Activated T-helper 2 cell treated with anti-CD3 and anti-CD28 coated beads, Interferon-gamma antibody, Interleukin-2, Interleukin-4, amounts not matched to agents 10 μg/mL and 5 μg/mL and 100 μg/mL, durations not matched to agents 14 hours and 24 hours and 36 hours (primary cell): ENCODE measurements at regions of chr3 and their contacts with region 1.

Region 1: GRCh38 chr3:184543843-184544512 is 17.6 kb upstream of the EPHB3 start:
- DNase-seq: peak; percentile 72
- H3K4me3 Mint-ChIP-seq: no peak overlapping the region
- H3K27ac Mint-ChIP-seq: no peak overlapping the region
- H3K4me1 Mint-ChIP-seq: peaks cover 2% of the 10 kb centered on the region
- H3K27me3 Mint-ChIP-seq: peaks cover 14% of the 10 kb centered on the region

Region 2: DNA sequence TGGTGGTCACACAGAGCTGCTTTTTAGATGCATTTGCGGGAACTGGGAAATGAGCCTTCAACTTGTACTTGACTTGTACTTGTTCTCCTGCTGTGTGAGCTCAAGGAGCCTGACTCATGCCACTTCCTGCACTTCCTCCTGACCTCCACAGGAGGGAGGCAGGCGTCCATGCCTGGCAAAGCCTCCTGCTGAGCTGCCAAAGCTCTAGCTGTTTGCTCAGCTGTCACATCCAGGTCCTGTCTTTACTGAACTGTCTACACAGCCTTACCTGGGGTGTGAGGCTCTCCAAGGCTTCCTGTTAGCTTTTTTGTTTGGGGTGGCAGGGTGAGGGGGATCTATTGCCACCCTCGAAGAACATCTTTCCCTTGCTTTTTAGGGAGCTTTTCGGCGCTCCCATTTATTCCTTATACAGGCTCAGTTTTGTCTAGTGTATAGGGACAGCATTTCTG is 172.4 kb before region 1 on chr3:
- intact Hi-C with region 1: loop called (anchors 1 kb)
- DNase-seq: peak; percentile 52
- H3K4me3 Mint-ChIP-seq: no peak overlapping the region
- H3K27ac Mint-ChIP-seq: no peak overlapping the region
- H3K4me1 Mint-ChIP-seq: peaks cover 12% of the 10 kb centered on the region
- H3K27me3 Mint-ChIP-seq: peaks cover 19% of the 10 kb centered on the region

Region 3: DNA sequence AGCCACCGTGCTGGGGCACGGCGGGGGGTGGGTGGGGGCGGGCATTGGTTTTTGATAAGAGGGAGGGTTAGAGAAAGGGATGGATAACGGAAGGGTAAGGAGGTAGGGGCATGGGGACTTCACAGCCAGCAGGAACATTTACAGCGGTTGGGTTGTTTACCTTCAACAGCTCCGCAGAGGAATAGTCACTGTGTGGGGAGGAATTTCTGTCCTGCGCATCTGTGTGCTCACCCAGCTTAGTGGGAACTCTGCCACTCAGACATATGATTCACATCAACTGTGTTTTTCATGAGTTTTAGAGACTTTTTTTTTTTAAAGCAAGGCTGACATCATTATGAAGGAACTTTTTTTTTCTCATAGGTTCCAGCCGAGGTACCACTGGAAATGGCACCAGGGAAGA is 144.6 kb before region 1 on chr3:
- intact Hi-C with region 1: no loop called
- DNase-seq: no peak
- H3K4me3 Mint-ChIP-seq: no peak overlapping the region
- H3K27ac Mint-ChIP-seq: no peak overlapping the region
- H3K4me1 Mint-ChIP-seq: no peaks in the 10 kb centered on the region
- H3K27me3 Mint-ChIP-seq: peaks cover 20% of the 10 kb centered on the region

Region 4: GRCh38 chr3:184417619-184418327 is 126.2 kb before region 1 on chr3:
- intact Hi-C with region 1: loop called (anchors 1 kb)
- DNase-seq: peak; percentile 53
- H3K4me3 Mint-ChIP-seq: no peak overlapping the region
- H3K27ac Mint-ChIP-seq: no peak overlapping the region
- H3K4me1 Mint-ChIP-seq: no peaks in the 10 kb centered on the region
- H3K27me3 Mint-ChIP-seq: peaks cover 6% of the 10 kb centered on the region

Region 5: DNA sequence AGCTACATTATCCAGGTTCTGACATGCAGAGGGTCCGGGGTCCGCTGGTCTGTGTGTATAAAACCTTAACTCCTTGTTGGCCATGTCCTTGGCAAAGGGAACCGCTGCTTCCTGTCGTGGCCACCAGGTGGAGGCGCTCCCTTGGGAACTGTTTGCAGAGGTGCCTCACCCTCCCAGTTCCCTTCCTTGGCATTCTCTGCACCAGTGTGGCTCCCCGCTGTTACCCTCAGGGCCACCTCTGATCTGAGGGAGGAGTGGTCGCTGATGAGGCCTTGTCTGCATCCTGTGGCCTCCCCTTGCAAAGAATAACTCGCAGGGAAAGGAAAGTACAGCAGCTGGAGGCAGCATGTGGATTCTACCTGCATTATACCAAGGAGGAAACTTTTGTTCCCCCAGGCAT is 74.6 kb before region 1 on chr3:
- intact Hi-C with region 1: loop called (anchors 1 kb)
- DNase-seq: no peak
- H3K4me3 Mint-ChIP-seq: no peak overlapping the region
- H3K27ac Mint-ChIP-seq: no peak overlapping the region
- H3K4me1 Mint-ChIP-seq: peaks cover 25% of the 10 kb centered on the region
- H3K27me3 Mint-ChIP-seq: peaks cover 10% of the 10 kb centered on the region

Region 6: GRCh38 chr3:184523825-184524615 is 20.0 kb before region 1 on chr3:
- intact Hi-C with region 1: no loop called
- DNase-seq: peak; percentile 39
- H3K4me3 Mint-ChIP-seq: peak overlapping the region; percentile 44
- H3K27ac Mint-ChIP-seq: peak overlapping the region; percentile 80
- H3K4me1 Mint-ChIP-seq: peaks cover 25% of the 10 kb centered on the region
- H3K27me3 Mint-ChIP-seq: peaks cover 8% of the 10 kb centered on the region

Region 7: GRCh38 chr3:184611607-184612281 is 67.8 kb after region 1 on chr3:
- intact Hi-C with region 1: no loop called
- DNase-seq: no peak
- H3K4me3 Mint-ChIP-seq: no peak overlapping the region
- H3K27ac Mint-ChIP-seq: no peak overlapping the region
- H3K4me1 Mint-ChIP-seq: peaks cover 5% of the 10 kb centered on the region
- H3K27me3 Mint-ChIP-seq: peaks cover 20% of the 10 kb centered on the region